Activated CD8-positive, alpha-beta T cell treated with anti-CD3 and anti-CD28 coated beads for 36 hours (primary cell): ENCODE measurements at regions of chr7 and their contacts with region 1.

Region 1: DNA sequence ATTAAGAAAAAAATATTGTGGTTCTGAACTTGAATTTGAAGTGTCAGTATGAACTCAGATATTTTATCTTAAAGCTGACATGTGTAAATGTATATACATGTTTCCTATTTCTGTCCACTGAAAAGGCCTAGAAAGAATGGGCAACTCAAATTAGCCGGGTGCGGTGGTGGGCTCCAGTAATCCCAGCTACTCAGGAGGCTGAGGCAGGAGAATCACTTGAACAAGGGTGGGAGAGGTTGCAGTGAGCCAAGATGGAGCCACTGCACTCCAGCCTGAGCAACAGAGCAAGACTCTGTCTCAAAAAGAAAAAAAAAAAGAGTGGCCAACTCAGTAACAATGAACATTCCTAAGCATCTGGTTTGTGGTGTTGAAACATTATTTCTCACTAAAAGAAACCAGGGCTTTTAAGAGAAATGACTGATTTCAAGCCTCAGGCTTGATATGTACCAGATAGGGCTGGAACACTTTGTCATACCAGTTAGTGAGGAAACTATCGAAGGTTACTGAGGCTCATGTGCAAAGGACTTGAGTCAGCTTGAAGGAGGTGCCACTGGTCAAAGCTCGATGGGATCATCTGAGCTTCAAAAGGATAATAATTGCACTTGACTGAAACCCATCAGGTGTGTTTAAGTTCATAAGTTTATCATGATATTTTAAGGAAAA is 40.5 kb downstream of the AOAH start:
- DNase-seq: peak; percentile 33
- ATAC-seq: peak; percentile 75
- H3K4me3 Mint-ChIP-seq: no peak overlapping the region
- H3K27ac Mint-ChIP-seq: peak overlapping the region; percentile 90
- H3K4me1 Mint-ChIP-seq: peaks cover 76% of the 10 kb centered on the region
- H3K27me3 Mint-ChIP-seq: no peaks in the 10 kb centered on the region
- CTCF ChIP-seq: no peak

Region 2: DNA sequence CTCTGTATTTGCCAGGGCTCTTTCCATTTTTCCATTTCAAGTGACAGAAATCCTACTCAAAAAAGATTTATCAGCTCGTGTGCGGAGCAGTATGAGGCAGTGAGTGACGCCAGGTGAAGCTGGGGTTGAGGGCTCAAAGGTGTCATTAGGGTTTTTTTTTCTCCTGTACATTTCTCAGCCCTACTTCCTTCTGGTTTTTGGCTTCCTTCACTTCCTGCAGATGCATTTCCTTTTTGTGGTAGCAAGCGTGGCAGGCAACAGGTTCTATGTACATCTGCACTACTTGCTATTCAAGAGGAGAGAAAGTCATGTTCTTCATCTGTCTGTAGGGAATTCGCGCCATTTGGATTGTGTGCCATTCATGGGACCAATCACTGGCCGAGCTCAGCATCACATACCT is 93.2 kb after region 1 on chr7:
- CTCF ChIA-PET with region 1: interaction called, 3 read pairs
- POLR2A ChIA-PET with region 1: interaction called, 4 read pairs
- intact Hi-C with region 1: loop called (anchors 5 kb)
- DNase-seq: peak; percentile 58
- ATAC-seq: peak; percentile 71
- H3K4me3 Mint-ChIP-seq: peak overlapping the region; percentile 65
- H3K27ac Mint-ChIP-seq: peak overlapping the region; percentile 78
- H3K4me1 Mint-ChIP-seq: peaks cover 83% of the 10 kb centered on the region
- H3K27me3 Mint-ChIP-seq: no peaks in the 10 kb centered on the region
- CTCF ChIP-seq: no peak

Region 3: GRCh38 chr7:36827726-36828703 is 144.2 kb after region 1 on chr7:
- CTCF ChIA-PET with region 1: no interaction called
- POLR2A ChIA-PET with region 1: no interaction called
- intact Hi-C with region 1: no loop called
- DNase-seq: no peak
- ATAC-seq: no peak
- H3K4me3 Mint-ChIP-seq: no peak overlapping the region
- H3K27ac Mint-ChIP-seq: no peak overlapping the region
- H3K4me1 Mint-ChIP-seq: no peaks in the 10 kb centered on the region
- H3K27me3 Mint-ChIP-seq: no peaks in the 10 kb centered on the region
- CTCF ChIP-seq: no peak